GM12878 (cell line): ENCODE measurements at regions of chr7 and their contacts with region 1.

Region 1: DNA sequence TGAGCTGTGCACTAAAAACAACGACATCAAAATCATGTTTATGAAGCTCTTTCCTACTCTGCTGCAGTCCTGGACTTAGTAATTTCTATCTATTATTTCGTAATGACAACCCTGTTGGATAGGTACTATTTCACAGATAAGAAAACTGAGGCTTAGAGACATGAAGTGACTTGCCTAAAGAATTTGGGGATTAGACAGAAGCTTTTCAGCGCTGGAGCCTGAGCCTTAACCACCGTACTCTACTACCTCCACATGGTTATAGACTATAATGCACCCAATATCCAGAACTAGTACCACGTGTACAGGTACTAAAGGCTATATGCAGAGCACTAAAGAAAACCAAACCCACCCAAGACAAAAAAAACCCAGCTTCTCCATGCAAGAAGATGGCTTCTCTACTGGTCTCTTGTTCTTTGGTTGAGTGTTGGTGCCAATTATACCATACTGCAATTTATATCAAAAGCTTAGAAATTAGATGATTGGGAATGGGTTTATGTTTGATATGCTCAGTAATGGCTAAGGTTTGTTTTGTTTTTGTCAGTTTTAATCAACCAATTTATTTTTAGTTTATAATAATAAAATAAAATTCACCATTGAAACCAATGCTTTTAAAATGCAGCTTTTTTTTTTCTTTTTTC is 6.5 kb upstream of the SNX10 start:
- DNase-seq: no peak
- ATAC-seq: peak; percentile 80
- H3K4me3 ChIP-seq: no peak overlapping the region
- H3K27ac ChIP-seq: no peak overlapping the region
- H3K4me1 ChIP-seq: no peaks in the 10 kb centered on the region
- H3K27me3 ChIP-seq: no peaks in the 10 kb centered on the region
- CTCF ChIP-seq: peak in 2 of 3 experiments; percentile 29 to 30; a peak in 2 of 6 replicates
- EP300 ChIP-seq: no peak
- POLR2A ChIP-seq: no peak
- RAD21 ChIP-seq: peak; percentile 38; the same call in 1 of the 2 replicates

Region 2: DNA sequence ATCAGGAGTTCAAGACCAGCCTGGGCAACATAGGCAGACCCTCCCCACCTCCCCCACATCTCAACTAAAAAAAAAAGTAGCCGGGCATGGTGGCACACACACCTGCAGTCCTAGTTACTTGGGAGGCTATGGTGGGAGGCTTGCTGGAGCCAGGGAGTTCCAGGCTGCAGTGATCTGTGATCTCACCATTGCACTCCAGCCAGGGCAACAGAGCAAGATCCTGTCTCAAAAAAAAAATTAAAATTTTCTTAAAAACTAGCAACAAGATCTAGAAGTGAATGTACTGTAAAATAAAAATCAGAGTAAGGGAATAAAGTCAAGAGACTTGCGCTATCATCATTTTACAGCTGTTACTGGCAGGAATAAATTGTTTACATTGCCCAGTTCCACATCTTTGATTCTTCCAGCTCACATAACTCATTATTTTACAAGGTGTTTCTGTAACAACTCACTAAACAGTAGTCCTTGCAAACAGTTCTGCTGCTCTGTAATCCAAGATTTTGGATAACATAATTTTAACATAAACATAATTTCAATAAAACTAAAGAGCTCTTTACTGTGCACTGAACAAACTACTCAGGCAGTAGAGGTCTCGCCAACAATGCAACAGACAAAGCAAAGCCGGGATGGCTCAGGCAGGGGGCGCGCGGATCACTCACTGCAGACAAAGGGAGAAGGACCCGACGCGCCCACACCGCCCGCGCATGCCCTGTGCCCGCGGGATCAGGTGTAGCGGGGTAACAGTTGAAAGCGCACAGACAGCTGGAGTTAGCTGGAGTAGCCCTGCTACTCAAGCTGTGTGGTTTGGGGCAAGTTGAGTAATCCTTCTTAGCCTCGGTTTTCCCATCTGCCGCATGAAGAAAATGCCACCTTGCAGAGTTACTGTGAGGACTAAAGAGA is 206.4 kb before region 1 on chr7:
- CTCF ChIA-PET with region 1: interaction called, 10 read pairs
- POLR2A ChIA-PET with region 1: no interaction called
- RAD21 ChIA-PET with region 1: interaction called, 5 read pairs
- SMC1A ChIA-PET with region 1: interaction called, 3 read pairs
- in situ Hi-C with region 1: no loop called
- intact Hi-C with region 1: loop called (anchors 5 kb)
- DNase-seq: peak; percentile 36
- ATAC-seq: peak; percentile 98
- H3K4me3 ChIP-seq: no peak overlapping the region
- H3K27ac ChIP-seq: no peak overlapping the region
- H3K4me1 ChIP-seq: no peaks in the 10 kb centered on the region
- H3K27me3 ChIP-seq: peaks cover 2 to 5% of the 10 kb centered on the region in 2 experiments; a peak in 1 of 4 replicates
- CTCF ChIP-seq: peak; percentile 50 to 61 (median 53); a peak in 5 of 6 replicates
- EP300 ChIP-seq: no peak
- POLR2A ChIP-seq: no peak
- RAD21 ChIP-seq: peak; percentile 60

Region 3: DNA sequence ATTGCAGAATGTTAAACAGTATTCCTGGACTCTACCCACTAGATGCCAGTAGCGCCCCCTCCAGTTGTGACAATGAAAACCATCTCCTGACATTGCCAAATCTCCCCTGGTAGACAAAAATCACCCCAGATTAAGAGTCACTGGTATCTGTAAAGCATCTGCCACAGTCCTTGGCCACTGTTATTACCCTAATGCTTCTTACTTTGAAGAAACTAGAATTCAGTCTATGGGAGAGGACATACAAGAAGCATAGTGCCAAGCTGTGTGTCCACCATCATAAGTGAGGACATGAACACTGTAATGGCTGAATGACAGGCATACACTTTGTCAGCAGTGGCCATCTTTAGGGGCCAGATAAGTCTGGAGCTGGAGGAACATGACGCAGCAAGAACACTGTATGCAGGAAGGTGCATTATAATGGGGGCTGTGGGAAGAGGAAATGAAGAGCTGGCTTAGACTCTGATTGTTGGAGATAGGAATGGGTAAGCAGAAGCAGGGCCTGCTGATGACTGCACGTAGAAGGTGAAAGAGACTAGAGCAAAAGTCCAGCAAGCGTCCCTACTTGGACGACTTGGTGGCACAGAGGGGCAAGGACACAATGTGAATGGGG is 51.1 kb before region 1 on chr7:
- CTCF ChIA-PET with region 1: no interaction called
- POLR2A ChIA-PET with region 1: no interaction called
- RAD21 ChIA-PET with region 1: no interaction called
- SMC1A ChIA-PET with region 1: no interaction called
- in situ Hi-C with region 1: no loop called
- intact Hi-C with region 1: no loop called
- DNase-seq: no peak
- ATAC-seq: no peak
- H3K4me3 ChIP-seq: no peak overlapping the region
- H3K27ac ChIP-seq: no peak overlapping the region
- H3K4me1 ChIP-seq: no peaks in the 10 kb centered on the region
- H3K27me3 ChIP-seq: no peaks in the 10 kb centered on the region; a peak in 1 of 4 replicates
- CTCF ChIP-seq: no peak
- EP300 ChIP-seq: no peak
- POLR2A ChIP-seq: no peak
- RAD21 ChIP-seq: no peak